Heart left ventricle (tissue), 16 donors: ENCODE measurements at regions of chr21 and their contacts with region 1.

Region 1: GRCh38 chr21:39675993-39676661 is 63.4 kb downstream of the B3GALT5 start:
- DNase-seq: peak in 4 of 5 donors; percentile 26 to 64 (median 54)
- ATAC-seq: peak; percentile 94 to 98 (median 96)
- H3K4me3 ChIP-seq: no peak overlapping the region
- H3K27ac ChIP-seq: peak overlapping the region in 11 of 12 donors; percentile 28 to 81 (median 67)
- H3K4me1 ChIP-seq: peaks cover 0 to 13% (median 5%) of the 10 kb centered on the region in 12 donors
- H3K27me3 ChIP-seq: no peaks in the 10 kb centered on the region
- CTCF ChIP-seq: no peak
- POLR2A ChIP-seq: no peak

Region 2: GRCh38 chr21:39620856-39621255 is 55.3 kb before region 1 on chr21:
- intact Hi-C with region 1: loop called in 1 of 10 experiments (anchors 5 kb)
- DNase-seq: no peak
- ATAC-seq: no peak
- H3K4me3 ChIP-seq: no peak overlapping the region
- H3K27ac ChIP-seq: no peak overlapping the region
- H3K4me1 ChIP-seq: no peaks in the 10 kb centered on the region
- H3K27me3 ChIP-seq: peaks cover 0 to 10% (median 0%) of the 10 kb centered on the region in 9 donors
- CTCF ChIP-seq: no peak
- POLR2A ChIP-seq: no peak

Region 3: GRCh38 chr21:39660191-39660980 is 15.7 kb before region 1 on chr21:
- intact Hi-C with region 1: loop called in 1 of 10 experiments (anchors 1 kb)
- DNase-seq: peak; percentile 65 to 76 (median 71)
- ATAC-seq: peak; percentile 83 to 97 (median 92)
- H3K4me3 ChIP-seq: peak overlapping the region in 9 of 12 donors; percentile 6 to 46 (median 27)
- H3K27ac ChIP-seq: peak overlapping the region in 11 of 12 donors; percentile 16 to 87 (median 52)
- H3K4me1 ChIP-seq: peaks cover 0 to 16% (median 10%) of the 10 kb centered on the region in 12 donors
- H3K27me3 ChIP-seq: no peaks in the 10 kb centered on the region
- CTCF ChIP-seq: no peak
- POLR2A ChIP-seq: no peak